ENCODE measurements at regions of chr9 and their contacts with region 1.

Region 1: DNA sequence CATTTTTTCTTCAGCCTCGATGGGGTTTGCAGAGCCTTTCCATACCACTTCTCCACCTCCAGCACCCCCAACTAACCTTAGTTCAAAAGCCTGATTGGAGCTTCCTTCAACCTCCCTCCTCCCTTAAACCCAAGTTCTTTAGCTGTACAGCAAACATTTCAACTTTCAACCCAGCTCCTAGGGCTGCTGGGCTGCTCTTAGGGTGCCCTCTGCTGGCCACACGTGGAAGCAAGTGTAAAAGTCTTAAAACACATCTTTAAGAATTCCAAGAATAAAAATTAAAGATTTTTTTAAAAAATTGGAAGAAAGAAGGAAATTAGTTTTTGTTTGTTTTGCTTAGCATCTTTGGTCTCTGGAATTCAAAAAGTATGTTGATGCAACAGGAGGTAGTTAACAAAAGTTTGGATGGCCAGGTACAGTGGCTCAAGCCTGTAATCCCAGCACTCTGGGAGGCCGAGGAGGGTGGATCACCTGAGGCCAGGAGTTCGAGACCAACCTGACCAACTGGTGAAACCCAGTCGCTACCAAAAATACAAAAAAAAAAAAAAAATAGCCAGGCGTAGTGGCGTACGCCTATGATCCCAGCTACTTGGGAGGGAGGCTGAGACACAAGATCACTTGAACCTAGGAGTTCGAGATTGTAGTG is 15.5 kb upstream of the HSD17B3 start:
- DNase-seq: peak; percentile 77
- H3K4me3 ChIP-seq: no peak overlapping the region
- H3K27ac ChIP-seq: no peak overlapping the region
- H3K4me1 ChIP-seq: peaks cover 0 to 4% (median 0%) of the 10 kb centered on the region in 6 donors
- H3K27me3 ChIP-seq: no peaks in the 10 kb centered on the region
- CTCF ChIP-seq: peak; percentile 31 to 82 (median 72)
- POLR2A ChIP-seq: no peak

Region 2: DNA sequence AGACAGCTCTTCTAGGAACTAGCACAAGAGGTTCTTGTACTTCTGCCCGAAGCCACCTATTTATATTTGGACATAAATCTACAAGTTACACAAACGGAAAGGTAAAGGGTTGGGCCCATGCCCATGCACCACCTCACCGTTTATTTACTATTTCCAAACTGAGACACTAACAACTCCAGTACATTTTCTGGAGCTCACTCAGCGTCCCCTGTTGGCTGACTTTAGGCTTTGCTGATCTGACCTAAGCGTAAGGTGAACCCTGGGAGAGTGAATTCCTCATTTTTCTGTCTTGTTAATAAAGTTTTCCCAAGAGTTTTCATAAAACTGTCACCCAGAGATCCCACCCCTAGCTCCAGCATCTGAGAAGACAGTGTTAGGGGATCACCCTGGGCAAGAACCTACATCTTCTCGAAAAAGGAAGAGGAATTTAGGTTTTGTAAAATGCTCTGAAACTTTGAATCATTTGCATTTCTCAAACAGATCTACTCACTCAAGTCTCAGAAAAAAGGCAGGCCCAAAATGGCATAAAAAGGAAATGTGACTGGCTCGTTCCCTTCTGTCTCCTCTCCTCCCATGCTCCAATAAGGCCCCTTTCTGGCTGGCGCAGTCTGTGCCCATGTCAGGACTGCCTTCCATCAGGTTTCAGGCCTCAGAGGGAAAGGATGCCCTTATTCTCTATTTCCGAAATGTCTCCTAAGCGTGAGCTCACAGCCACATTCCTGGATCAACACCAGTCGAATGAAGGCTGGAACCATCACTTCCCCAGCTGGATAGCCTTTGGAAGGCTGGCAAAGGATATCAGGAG is 1201.3 kb before region 1 on chr9:
- intact Hi-C with region 1: no loop called
- DNase-seq: no peak
- H3K4me3 ChIP-seq: no peak overlapping the region
- H3K27ac ChIP-seq: no peak overlapping the region
- H3K4me1 ChIP-seq: no peaks in the 10 kb centered on the region
- H3K27me3 ChIP-seq: no peaks in the 10 kb centered on the region
- CTCF ChIP-seq: no peak
- POLR2A ChIP-seq: no peak

Region 3: GRCh38 chr9:96232539-96233241 is 84.8 kb before region 1 on chr9:
- intact Hi-C with region 1: loop called (anchors 5 kb)
- DNase-seq: no peak
- H3K4me3 ChIP-seq: no peak overlapping the region
- H3K27ac ChIP-seq: peak overlapping the region in 3 of 8 donors; percentile 13 to 48 (median 44)
- H3K4me1 ChIP-seq: peaks cover 0 to 8% (median 0%) of the 10 kb centered on the region in 6 donors
- H3K27me3 ChIP-seq: peaks cover 0 to 13% (median 0%) of the 10 kb centered on the region in 7 donors
- CTCF ChIP-seq: peak in 10 of 11 experiments; percentile 18 to 73 (median 61)
- POLR2A ChIP-seq: no peak

Region 4: GRCh38 chr9:96418074-96418809 is 100.8 kb after region 1 on chr9 and contains the start of gene ZNF367:
- intact Hi-C with region 1: no loop called
- DNase-seq: peak; percentile 98
- H3K4me3 ChIP-seq: peak within 1 kb of the TSS; percentile 71 to 95 (median 89)
- H3K27ac ChIP-seq: peak within 1 kb of the TSS; percentile 93 to 99 (median 98)
- H3K4me1 ChIP-seq: peaks cover 10 to 62% (median 50%) of the 10 kb centered on the region in 6 donors
- H3K27me3 ChIP-seq: no peaks in the 10 kb centered on the region
- CTCF ChIP-seq: peak in 2 of 11 experiments; percentile 20 to 31
- POLR2A ChIP-seq: no peak
- total RNA-seq, gene ZNF367: 1.2 to 3.7 (median 2.2) TPM